ENCODE measurements at regions of chr12 and their contacts with region 1.

Region 1: DNA sequence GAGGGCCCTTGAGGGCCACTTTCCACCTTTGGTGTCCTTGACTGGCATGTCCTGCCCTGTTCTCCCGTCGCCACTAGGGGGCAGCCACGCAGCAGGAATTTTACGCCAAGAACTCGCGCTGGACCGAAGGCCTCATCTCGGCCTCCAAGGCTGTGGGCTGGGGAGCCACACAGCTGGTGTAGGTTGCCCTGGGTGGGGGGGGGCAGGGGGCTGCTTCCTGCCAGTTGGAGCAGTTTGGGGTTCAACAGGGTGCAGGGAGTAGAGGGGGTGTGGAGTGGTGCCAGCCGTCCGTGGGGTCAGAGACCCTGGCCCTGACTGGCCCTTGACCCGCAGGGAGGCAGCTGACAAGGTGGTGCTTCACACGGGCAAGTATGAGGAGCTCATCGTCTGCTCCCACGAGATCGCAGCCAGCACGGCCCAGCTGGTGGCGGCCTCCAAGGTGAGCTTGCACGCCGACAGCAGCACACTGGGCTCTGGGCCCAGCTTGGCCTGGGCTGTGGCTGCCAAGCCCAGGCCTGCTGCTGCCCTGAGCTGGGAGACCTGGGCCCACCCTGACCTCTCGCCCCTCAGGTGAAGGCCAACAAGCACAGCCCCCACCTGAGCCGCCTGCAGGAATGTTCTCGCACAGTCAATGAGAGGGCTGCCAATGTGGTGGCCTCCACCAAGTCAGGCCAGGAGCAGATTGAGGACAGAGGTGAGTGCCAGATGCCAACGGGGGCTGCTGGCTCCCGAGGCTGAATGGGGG is 25.3 kb downstream of the HIP1R start:
- DNase-seq: no peak
- H3K4me3 ChIP-seq: no peak overlapping the region
- H3K27ac ChIP-seq: peak overlapping the region; percentile 52 to 71 (median 62)
- H3K4me1 ChIP-seq: peaks cover 37 to 48% (median 44%) of the 10 kb centered on the region in 4 donors
- H3K27me3 ChIP-seq: no peaks in the 10 kb centered on the region
- CTCF ChIP-seq: peak; percentile 95 to 97 (median 95)
- EP300 ChIP-seq: no peak
- POLR2A ChIP-seq: no peak

Region 2: DNA sequence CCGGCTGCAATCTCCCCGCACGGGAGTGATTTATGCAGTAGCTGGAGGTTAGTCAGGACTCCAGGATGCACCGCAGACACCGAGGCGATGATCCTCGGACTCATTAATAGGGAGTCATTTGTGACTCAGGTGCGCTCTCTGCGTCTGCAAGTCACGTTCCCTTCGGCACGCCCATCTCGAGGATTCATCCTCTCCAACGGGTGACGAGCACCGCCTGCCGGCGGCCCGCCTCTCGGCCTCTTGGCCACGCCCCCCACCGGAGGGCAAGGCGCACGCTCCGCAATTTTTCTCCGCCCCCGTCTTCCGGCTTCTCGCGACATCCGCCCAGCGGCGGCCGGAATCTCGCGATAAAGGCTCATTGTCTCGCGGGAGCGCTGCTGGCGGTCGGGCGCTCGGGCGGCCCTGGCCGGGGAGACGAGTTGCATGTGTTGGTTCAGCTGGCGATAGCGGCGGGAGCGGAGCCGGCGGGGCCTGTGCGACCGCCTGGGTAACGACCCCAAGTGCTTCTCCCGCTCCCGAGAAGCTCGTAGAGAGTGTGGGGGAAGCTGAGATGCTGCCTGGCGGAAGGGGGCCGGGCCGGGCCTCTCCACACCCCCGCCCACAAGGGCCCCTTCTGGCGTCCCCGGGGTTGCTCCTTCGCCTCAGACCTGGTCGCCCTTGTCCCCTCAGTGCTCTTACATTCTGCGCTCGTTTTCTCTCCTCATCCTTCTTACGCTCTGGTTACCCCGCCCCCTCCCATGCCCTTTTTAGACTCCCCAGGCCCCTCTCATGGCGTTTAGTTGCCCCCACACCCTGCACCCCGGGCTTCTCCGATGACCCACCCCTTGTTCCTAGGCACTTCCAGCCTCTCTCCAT is 107.8 kb before region 1 on chr12 and contains the start of gene DENR:
- intact Hi-C with region 1: no loop called
- DNase-seq: peak; percentile 99
- H3K4me3 ChIP-seq: peak within 1 kb of the TSS; percentile 71 to 91 (median 89)
- H3K27ac ChIP-seq: peak within 1 kb of the TSS; percentile 78 to 86 (median 84)
- H3K4me1 ChIP-seq: peaks cover 15 to 33% (median 28%) of the 10 kb centered on the region in 4 donors
- H3K27me3 ChIP-seq: no peaks in the 10 kb centered on the region
- CTCF ChIP-seq: peak; percentile 80 to 97 (median 92)
- EP300 ChIP-seq: no peak
- POLR2A ChIP-seq: peak; percentile 43
- total RNA-seq, gene DENR: 20.7 to 32.1 (median 23.7) TPM

Region 3: DNA sequence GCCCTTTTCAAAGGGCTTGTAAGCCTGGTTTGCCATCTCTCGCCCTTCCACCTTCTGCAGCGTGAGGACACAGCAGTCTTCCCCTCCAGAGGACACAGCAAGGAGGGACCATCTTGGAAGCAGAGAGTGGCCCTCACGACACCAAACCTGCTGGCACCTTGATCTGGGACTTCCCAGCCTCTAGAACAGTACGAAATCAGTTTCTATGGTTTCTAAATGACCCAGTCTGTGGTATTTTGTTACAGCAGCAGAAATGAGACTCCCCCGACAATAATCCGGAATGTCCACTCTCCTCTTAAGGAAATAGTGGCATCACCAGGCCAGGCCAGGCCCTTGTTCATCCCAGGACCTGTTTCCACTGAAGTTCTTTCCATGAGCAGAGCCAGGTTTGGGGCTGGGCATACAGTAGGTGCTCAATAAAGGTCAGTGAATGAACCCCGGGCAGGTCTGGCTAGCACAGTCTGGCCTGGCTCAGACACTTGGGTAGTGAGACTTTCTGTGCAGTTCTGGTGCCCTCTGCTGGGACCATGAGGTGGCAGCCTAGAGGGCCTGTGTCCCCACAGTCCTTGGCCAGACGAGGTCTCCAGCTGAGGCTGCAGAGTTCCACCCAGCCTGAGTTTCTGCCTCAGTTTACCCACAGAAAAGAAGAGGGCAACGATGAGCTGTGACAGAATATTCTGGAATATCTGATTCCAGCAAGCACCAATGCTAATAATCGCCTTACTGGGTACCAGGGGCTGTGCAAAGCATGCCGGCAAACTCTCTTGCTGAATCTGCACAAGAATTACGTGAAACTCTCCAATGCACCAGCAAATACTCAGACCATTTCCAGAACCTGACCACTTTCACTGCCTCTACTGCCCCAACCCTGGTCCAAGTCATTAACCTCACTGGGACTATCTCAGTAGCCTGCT is 91.7 kb after region 1 on chr12:
- intact Hi-C with region 1: loop called (anchors 1 kb)
- DNase-seq: peak; percentile 93
- H3K4me3 ChIP-seq: no peak overlapping the region
- H3K27ac ChIP-seq: no peak overlapping the region
- H3K4me1 ChIP-seq: peaks cover 6 to 20% (median 18%) of the 10 kb centered on the region in 4 donors
- H3K27me3 ChIP-seq: no peaks in the 10 kb centered on the region
- CTCF ChIP-seq: peak; percentile 87 to 93 (median 90)
- EP300 ChIP-seq: no peak
- POLR2A ChIP-seq: no peak

Measured in esophagus muscularis mucosa (tissue), 4 donors.